ENCODE measurements at regions of chr4 and their contacts with region 1.

Region 1: GRCh38 chr4:53748328-53748772 is 157.1 kb upstream of the LNX1 start:
- DNase-seq: peak; percentile 99
- H3K4me3 ChIP-seq: peak overlapping the region; percentile 22
- H3K27ac ChIP-seq: peak overlapping the region; percentile 93
- H3K4me1 ChIP-seq: peaks cover 84% of the 10 kb centered on the region
- CTCF ChIP-seq: no peak

Region 2: GRCh38 chr4:51842554-51843308 is 1905.6 kb before region 1 on chr4 and contains the start of gene DCUN1D4:
- CTCF ChIA-PET with region 1: no interaction called
- POLR2A ChIA-PET with region 1: no interaction called
- intact Hi-C with region 1: loop called (anchors 10 kb)
- DNase-seq: peak; percentile 99
- H3K4me3 ChIP-seq: peak within 1 kb of the TSS; percentile 78
- H3K27ac ChIP-seq: peak within 1 kb of the TSS; percentile 63
- H3K4me1 ChIP-seq: peaks cover 16% of the 10 kb centered on the region
- CTCF ChIP-seq: no peak
- total RNA-seq, gene DCUN1D4: 21.3 and 30.4 TPM in 2 replicates

Region 3: DNA sequence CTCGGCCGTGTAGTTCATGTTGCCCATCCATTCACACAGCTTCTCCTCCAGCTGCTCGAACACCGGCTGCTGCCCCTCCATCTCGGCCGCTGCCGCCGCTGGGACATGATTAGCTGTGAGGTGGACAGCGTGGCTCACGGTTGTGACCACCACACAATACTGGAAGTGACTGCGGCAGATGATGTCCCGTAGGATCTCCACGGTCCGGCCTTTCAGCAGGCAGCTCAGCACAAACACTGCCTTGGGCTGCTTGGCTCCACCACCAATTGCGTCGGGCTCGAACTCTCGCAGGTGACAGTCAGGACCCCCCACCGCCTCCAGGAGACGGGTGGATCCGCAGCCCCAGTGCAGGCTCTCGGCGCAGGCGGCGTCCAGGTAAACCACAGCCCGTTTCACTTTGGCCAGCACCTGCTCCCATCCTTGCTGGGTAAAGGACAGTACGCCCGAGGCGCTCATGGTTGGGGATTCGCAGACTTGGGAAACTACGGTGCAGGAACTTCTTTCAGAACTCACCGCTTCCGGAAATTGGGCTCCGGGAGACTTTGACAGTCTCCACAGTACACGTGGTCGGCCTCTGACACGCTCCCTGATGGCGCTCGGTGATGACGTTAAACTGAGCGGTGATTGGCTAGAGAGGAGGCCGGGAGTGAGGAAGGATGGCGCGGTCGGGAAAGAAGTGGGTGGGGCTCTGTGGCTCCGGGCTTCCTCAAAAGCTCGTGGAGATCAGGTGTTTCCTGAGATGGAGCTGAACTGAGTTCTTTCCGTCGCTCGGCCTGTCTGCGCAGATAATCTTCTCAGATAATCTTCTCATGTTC is 382.7 kb before region 1 on chr4 and contains the start of gene SCFD2:
- CTCF ChIA-PET with region 1: no interaction called
- POLR2A ChIA-PET with region 1: no interaction called
- intact Hi-C with region 1: loop called (anchors 2 kb)
- DNase-seq: peak; percentile 96
- H3K4me3 ChIP-seq: peak within 1 kb of the TSS; percentile 98
- H3K27ac ChIP-seq: peak within 1 kb of the TSS; percentile 50
- H3K4me1 ChIP-seq: peaks cover 60% of the 10 kb centered on the region
- CTCF ChIP-seq: no peak
- total RNA-seq, gene SCFD2: 52.0 and 52.9 TPM in 2 replicates

Region 4: GRCh38 chr4:53507671-53508286 is 240.6 kb before region 1 on chr4:
- CTCF ChIA-PET with region 1: no interaction called
- POLR2A ChIA-PET with region 1: no interaction called
- intact Hi-C with region 1: no loop called
- DNase-seq: no peak
- H3K4me3 ChIP-seq: no peak overlapping the region
- H3K27ac ChIP-seq: no peak overlapping the region
- H3K4me1 ChIP-seq: no peaks in the 10 kb centered on the region
- CTCF ChIP-seq: no peak

Region 5: DNA sequence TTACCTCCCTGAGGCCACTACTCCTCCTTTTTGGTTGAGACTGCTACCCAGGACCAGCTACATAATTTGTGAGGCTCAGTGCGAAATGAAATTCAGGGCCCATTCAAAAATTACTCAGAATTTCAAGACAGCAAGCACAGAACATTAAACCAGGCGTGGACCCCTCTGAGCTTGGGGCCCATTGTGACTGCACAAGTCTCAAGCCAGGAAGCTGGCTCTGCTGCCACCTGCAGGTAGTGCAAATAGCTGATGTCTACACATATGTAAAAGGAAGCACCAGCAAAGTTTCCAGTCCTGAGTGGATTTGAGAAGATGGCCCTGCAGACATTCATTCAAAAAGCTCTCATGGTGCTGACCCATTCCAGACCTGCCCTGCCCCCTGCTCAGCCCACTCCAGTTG is 56.4 kb after region 1 on chr4:
- CTCF ChIA-PET with region 1: no interaction called
- POLR2A ChIA-PET with region 1: interaction called, 3 read pairs
- intact Hi-C with region 1: loop called (anchors 5 kb)
- DNase-seq: peak; percentile 78
- H3K4me3 ChIP-seq: no peak overlapping the region
- H3K27ac ChIP-seq: no peak overlapping the region
- H3K4me1 ChIP-seq: no peaks in the 10 kb centered on the region
- CTCF ChIP-seq: peak; percentile 89

Measured in OCI-LY7 (cell line).